Aorta (tissue), 5 donors: ENCODE measurements at regions of chr5 and their contacts with region 1.

Region 1: GRCh38 chr5:139439013-139439903 is at the start of gene DNAJC18:
- DNase-seq: peak; percentile 97 to 99
- ATAC-seq: peak; percentile 97
- H3K4me3 ChIP-seq: peak within 1 kb of the TSS; percentile 64 to 85
- H3K27ac ChIP-seq: peak within 1 kb of the TSS; percentile 71 to 92
- H3K4me1 ChIP-seq: peaks cover 0 to 3% of the 10 kb centered on the region in 2 donors
- H3K27me3 ChIP-seq: no peaks in the 10 kb centered on the region
- total RNA-seq, gene DNAJC18: 18.5 to 26.4 TPM

Region 2: GRCh38 chr5:139385061-139386049 is 53.9 kb before region 1 on chr5:
- intact Hi-C with region 1: no loop called
- DNase-seq: no peak
- ATAC-seq: no peak
- H3K4me3 ChIP-seq: no peak overlapping the region
- H3K27ac ChIP-seq: no peak overlapping the region
- H3K4me1 ChIP-seq: no peaks in the 10 kb centered on the region
- H3K27me3 ChIP-seq: no peaks in the 10 kb centered on the region

Region 3: DNA sequence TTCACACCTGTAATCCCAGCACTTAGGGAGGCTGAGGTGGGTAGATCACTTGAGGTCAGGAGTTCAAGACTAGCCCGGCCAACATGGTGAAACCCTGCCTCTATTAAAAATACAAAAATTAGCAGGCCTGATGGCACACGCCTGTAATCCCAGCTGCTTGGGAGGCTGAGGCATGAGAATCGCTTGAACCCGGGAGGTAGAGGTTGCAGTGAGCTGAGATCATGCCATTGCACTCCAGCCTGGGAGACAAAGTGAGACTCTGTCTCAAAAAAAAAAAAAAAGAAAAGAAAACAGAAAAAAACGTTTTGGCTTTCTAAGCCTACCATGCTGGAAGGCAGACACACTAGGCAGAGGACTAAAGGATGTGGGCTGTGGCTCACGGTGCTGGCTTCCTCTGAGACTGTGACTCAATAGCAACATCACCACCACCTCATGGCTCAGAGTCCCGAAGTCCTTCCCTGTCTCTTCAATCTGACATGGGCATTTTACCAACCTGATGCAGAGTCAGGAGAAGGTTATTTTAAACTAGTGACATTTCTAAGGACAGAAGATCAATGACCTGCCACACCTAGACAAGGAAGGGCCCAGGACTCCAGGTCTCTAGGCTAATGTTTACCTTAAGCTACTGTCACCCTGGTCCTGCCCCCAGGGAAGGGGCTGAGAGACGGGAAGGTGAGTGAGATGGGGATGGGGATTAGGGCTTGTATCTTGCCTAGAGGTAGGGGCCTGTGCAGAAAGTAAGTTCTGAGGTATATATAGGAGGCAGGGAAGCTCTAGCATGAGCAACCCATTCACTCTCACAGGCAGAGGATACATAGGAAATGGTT is 19.5 kb after region 1 on chr5:
- intact Hi-C with region 1: no loop called
- DNase-seq: peak; percentile 69 to 70
- ATAC-seq: no peak
- H3K4me3 ChIP-seq: no peak overlapping the region
- H3K27ac ChIP-seq: no peak overlapping the region
- H3K4me1 ChIP-seq: no peaks in the 10 kb centered on the region
- H3K27me3 ChIP-seq: no peaks in the 10 kb centered on the region

Region 4: DNA sequence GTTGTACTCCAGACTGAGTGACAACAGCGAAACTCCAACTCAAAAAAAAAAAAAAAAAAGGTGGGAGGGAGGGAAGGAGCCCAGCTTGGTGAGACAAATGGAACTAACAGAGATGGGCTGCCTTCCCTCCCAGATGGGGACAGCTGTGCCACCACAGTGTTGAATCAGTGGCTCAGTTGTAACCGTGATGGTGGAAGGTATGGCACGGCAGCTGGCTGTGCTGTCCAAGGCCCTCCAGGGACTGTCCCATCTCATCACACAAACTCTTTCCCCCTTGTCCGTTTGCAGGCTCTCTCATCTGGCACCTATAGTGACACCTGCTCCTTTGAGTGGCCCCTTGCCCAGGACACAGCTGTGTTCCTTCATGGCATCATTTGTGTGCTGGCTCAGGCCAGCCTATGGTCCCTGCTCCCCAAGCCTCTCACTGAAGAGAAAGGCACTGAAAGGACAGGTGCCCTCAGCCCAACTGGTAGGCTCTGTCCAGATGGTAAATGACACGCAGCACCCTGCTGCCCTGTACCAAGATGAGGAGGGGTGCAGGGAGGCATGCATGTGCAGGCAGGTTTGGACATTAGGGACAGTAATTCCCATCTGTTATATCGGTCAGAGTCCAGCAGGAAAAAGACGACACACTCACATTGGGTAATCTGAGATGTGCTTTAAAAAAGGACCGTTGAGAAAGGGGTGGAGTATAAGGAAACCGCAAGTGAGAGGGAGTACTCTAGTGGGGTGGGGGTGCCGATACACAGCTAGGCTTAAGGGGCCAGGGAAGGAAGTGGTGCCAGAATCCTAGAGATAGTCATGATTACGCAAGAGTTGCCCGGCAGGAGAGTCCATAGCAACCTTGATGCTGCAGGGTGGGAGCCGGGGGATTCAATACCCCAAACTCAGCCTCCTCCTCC is 35.9 kb after region 1 on chr5:
- intact Hi-C with region 1: loop called (anchors 5 kb)
- DNase-seq: no peak
- ATAC-seq: peak; percentile 50
- H3K4me3 ChIP-seq: no peak overlapping the region
- H3K27ac ChIP-seq: no peak overlapping the region
- H3K4me1 ChIP-seq: no peaks in the 10 kb centered on the region
- H3K27me3 ChIP-seq: no peaks in the 10 kb centered on the region

Region 5: DNA sequence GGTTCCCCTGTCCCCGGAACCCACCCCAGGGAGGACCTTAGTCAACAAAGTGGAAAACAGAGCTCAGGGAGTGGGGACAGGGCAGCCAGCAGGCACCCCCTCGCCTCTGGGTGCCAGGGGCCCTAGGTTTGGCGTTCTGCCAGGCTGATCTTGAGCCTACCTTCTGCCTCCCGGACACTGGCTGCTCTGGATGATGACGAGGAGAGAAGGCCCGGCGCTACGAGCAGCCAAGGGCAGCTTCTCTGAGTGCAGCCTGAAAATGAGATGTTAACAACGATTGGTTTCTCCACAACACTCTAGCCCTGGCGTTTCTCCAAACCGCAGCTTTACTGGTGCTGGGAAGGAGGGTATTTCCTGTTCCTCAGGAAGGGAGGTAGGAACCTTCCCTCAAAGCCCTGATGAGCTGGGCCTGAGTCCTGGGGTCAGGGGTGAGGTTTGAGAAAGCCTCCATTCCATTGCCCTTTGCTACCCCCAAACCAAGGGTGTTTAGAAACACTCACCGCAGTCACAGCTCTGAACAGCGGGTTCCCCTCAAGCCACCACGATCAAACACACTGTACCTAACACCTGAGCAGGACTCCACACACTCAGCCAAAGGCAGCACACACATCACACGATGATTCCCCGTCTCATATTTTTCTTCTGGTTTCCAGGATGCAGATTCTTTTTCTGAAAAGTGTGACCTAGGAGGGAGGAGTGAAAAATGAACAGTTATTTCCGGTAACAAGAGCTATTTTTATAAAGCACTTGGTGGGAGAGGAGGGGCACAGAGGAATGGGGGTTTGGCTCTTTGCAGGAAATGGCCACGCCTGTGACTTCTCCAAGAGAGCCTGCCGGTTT is 43.0 kb after region 1 on chr5 and contains the start of gene STING1:
- intact Hi-C with region 1: loop called (anchors 5 kb)
- DNase-seq: peak; percentile 91 to 95
- ATAC-seq: peak; percentile 75
- H3K4me3 ChIP-seq: peak within 1 kb of the TSS; percentile 34 to 60
- H3K27ac ChIP-seq: peak within 1 kb of the TSS; percentile 96
- H3K4me1 ChIP-seq: no peaks in the 10 kb centered on the region
- H3K27me3 ChIP-seq: no peaks in the 10 kb centered on the region
- total RNA-seq, gene STING1: 111 to 151 TPM